Heart left ventricle (tissue), 16 donors: ENCODE measurements at regions of chr1 and their contacts with region 1.

Region 1: DNA sequence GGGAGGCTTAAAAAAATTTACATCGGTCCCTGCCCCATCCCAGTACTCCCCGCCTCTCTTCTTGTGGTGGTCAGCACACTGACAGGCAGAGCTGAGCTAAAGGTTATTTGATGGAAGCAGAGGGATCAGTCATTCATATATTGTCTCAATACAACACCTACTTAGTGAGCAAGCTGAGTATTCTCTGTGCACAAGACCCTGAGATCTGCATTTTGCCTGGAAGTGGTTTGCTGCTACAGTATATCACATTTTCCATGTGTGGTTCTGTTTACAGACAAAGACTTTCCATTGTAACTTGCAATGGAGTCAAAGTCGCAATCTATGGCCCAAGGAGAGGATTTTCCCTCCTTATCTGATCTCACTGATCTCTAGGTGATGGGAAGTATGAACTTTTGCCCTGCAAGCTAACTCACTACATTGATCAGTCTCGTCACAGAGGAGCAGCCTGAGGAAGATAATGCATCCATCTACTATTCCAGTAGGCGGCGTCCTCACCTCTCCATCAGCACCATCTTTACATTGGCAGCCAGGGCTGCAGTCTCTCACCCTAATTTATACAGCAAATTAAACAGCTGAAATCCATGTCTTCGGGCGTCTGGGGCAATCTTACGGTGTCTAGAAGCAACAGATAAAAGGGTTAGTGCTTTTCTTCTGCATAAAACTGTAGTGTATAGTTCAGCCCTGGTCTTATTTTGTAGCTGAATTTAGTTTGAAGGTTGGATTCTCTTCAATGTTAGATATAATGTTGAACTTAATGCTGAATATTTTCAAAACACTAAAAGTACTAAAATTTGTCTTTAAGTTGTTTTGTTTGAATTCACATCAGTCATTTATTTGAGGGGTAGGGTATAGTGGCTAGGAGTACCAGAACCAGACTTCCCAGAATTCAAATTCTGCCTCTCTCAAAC is 3.2 kb upstream of the TRAF5 start:
- DNase-seq: peak in 2 of 5 donors; percentile 31 to 45
- ATAC-seq: peak in 3 of 4 donors; percentile 51 to 68 (median 54)
- H3K4me3 ChIP-seq: no peak overlapping the region
- H3K27ac ChIP-seq: no peak overlapping the region
- H3K4me1 ChIP-seq: peaks cover 0 to 20% (median 8%) of the 10 kb centered on the region in 12 donors
- H3K27me3 ChIP-seq: no peaks in the 10 kb centered on the region
- CTCF ChIP-seq: peak; percentile 43 to 78 (median 62)
- POLR2A ChIP-seq: no peak

Region 2: GRCh38 chr1:211158866-211159265 is 164.5 kb before region 1 on chr1:
- intact Hi-C with region 1: no loop called
- DNase-seq: no peak
- ATAC-seq: no peak
- H3K4me3 ChIP-seq: no peak overlapping the region
- H3K27ac ChIP-seq: no peak overlapping the region
- H3K4me1 ChIP-seq: no peaks in the 10 kb centered on the region
- H3K27me3 ChIP-seq: peaks cover 0 to 13% (median 0%) of the 10 kb centered on the region in 9 donors
- CTCF ChIP-seq: no peak
- POLR2A ChIP-seq: no peak

Region 3: DNA sequence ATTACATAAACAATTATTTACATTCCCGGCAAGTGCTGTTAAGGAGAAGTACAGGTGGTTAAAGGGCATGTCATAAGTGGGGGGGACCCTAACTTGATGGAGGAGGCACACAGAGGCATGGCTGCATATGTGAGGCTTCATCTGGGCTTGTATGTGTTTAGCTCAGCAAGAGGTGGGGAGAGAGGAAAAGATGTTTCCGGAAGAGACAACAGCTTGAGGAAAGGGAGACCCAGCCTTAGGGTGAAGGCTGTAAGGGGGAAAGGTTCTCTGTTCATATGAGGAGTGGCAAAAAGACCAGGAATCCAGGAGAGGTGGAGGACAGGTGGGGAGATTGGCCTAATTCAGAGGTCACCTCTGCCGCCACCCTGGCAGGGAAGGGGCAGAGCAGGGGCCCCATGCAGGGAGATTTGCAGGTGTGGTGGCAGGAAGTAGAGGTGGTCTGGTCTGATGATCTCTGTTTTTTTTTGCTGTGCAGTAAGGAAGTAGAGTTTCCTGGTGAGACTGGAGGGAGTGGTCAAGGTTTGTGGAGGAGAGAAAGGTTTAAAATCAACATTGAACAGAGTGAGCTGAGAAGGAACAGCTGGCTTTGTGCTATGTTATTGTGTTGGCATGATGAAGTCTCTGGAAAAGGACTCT is 12.2 kb after region 1 on chr1:
- intact Hi-C with region 1: no loop called
- DNase-seq: no peak
- ATAC-seq: peak in 1 of 4 donors; percentile 14
- H3K4me3 ChIP-seq: no peak overlapping the region
- H3K27ac ChIP-seq: peak overlapping the region in 1 of 12 donors; percentile 68
- H3K4me1 ChIP-seq: peaks cover 0 to 56% (median 6%) of the 10 kb centered on the region in 12 donors
- H3K27me3 ChIP-seq: no peaks in the 10 kb centered on the region
- CTCF ChIP-seq: no peak
- POLR2A ChIP-seq: no peak

Region 4: DNA sequence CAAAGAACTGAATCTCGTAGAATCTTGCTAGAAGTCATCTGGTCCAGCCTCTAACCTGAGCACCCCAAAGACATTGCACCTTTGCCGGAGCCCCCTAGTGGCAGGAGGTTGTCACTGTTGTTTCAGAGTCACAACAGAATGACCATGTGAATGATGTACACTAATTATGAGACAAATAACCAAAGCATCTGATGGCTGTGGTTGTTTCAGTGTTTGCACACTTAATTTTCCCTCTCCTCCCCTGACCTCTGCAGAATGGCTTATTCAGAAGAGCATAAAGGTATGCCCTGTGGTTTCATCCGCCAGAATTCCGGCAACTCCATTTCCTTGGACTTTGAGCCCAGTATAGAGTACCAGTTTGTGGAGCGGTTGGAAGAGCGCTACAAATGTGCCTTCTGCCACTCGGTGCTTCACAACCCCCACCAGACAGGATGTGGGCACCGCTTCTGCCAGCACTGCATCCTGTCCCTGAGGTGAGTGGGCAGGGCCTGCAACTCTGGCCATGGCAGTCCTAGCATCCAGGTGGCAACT is 29.6 kb after region 1 on chr1:
- intact Hi-C with region 1: no loop called
- DNase-seq: no peak
- ATAC-seq: no peak
- H3K4me3 ChIP-seq: no peak overlapping the region
- H3K27ac ChIP-seq: peak overlapping the region in 1 of 12 donors; percentile 20
- H3K4me1 ChIP-seq: peaks cover 0 to 20% (median 0%) of the 10 kb centered on the region in 12 donors
- H3K27me3 ChIP-seq: no peaks in the 10 kb centered on the region
- CTCF ChIP-seq: peak; percentile 34 to 70 (median 55)
- POLR2A ChIP-seq: no peak

Region 5: GRCh38 chr1:211382714-211383480 is 59.5 kb after region 1 on chr1:
- intact Hi-C with region 1: loop called in 3 of 10 experiments (anchors 5 to 10 kb)
- DNase-seq: peak; percentile 95 to 98 (median 96)
- ATAC-seq: peak; percentile 100
- H3K4me3 ChIP-seq: peak overlapping the region; percentile 56 to 89 (median 77)
- H3K27ac ChIP-seq: peak overlapping the region; percentile 73 to 98 (median 94)
- H3K4me1 ChIP-seq: peaks cover 0 to 23% (median 5%) of the 10 kb centered on the region in 12 donors
- H3K27me3 ChIP-seq: no peaks in the 10 kb centered on the region
- CTCF ChIP-seq: no peak
- POLR2A ChIP-seq: peak; percentile 66 to 93

Region 6: DNA sequence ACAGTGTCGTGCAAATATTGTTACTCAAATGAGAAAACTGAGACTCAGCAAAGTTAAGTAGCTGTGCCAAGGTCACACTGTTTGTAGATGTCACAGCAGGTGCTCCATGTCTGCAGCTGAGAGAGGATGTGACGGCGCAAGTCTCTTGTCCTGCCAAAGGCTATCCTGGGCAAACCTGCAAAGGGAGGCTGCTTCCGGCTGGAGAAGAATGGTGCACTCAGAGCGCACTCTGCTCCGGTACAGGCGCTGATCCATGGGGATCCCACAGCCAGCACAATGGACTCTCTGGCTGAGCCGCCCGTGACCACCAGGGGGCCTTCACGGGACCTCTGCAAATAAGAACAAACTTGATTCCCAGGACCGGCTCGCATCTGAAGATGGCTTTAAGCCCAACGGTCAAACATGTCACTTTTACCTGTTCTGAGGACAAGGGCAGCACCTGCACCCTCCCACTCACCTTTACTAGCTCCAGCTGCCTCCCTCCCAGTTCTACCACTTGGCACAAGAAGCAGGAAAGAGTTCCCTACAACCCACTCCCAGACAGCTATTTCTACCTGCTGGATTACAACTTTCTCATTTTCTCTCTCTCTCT is 146.6 kb after region 1 on chr1:
- intact Hi-C with region 1: loop called in 8 of 10 experiments (anchors 5 to 10 kb)
- DNase-seq: peak; percentile 72 to 87 (median 83)
- ATAC-seq: peak; percentile 79 to 96 (median 93)
- H3K4me3 ChIP-seq: no peak overlapping the region
- H3K27ac ChIP-seq: peak overlapping the region in 1 of 12 donors; percentile 4
- H3K4me1 ChIP-seq: peaks cover 0 to 20% (median 9%) of the 10 kb centered on the region in 12 donors
- H3K27me3 ChIP-seq: no peaks in the 10 kb centered on the region
- CTCF ChIP-seq: peak; percentile 78 to 91 (median 82)
- POLR2A ChIP-seq: no peak

Region 7: GRCh38 chr1:211476200-211476849 is 152.9 kb after region 1 on chr1:
- intact Hi-C with region 1: loop called in 9 of 10 experiments (anchors 2 to 10 kb)
- DNase-seq: peak in 4 of 5 donors; percentile 58 to 72 (median 63)
- ATAC-seq: peak in 2 of 4 donors; percentile 64 to 67
- H3K4me3 ChIP-seq: no peak overlapping the region
- H3K27ac ChIP-seq: no peak overlapping the region
- H3K4me1 ChIP-seq: peaks cover 0 to 6% (median 0%) of the 10 kb centered on the region in 12 donors
- H3K27me3 ChIP-seq: peaks cover 0 to 27% (median 8%) of the 10 kb centered on the region in 9 donors
- CTCF ChIP-seq: peak; percentile 58 to 88 (median 74)
- POLR2A ChIP-seq: no peak

Region 8: GRCh38 chr1:211514030-211514754 is 190.8 kb after region 1 on chr1:
- intact Hi-C with region 1: loop called in 8 of 10 experiments (anchors 5 to 10 kb)
- DNase-seq: peak; percentile 71 to 87 (median 81)
- ATAC-seq: peak; percentile 86 to 91 (median 88)
- H3K4me3 ChIP-seq: no peak overlapping the region
- H3K27ac ChIP-seq: no peak overlapping the region
- H3K4me1 ChIP-seq: peaks cover 0 to 17% (median 8%) of the 10 kb centered on the region in 12 donors
- H3K27me3 ChIP-seq: peaks cover 0 to 8% (median 0%) of the 10 kb centered on the region in 9 donors
- CTCF ChIP-seq: peak; percentile 64 to 86 (median 75)
- POLR2A ChIP-seq: no peak